ENCODE measurements at regions of chr1 and their contacts with region 1.

Region 1: GRCh38 chr1:212455803-212456528 is 23.2 kb downstream of the NENF start:
- DNase-seq: peak; percentile 82
- CTCF ChIP-seq: peak; percentile 90

Region 2: GRCh38 chr1:211698161-211699026 is 757.6 kb before region 1 on chr1:
- CTCF ChIA-PET with region 1: interaction called, 22 read pairs
- POLR2A ChIA-PET with region 1: no interaction called
- DNase-seq: peak; percentile 86
- CTCF ChIP-seq: peak; percentile 99

Region 3: DNA sequence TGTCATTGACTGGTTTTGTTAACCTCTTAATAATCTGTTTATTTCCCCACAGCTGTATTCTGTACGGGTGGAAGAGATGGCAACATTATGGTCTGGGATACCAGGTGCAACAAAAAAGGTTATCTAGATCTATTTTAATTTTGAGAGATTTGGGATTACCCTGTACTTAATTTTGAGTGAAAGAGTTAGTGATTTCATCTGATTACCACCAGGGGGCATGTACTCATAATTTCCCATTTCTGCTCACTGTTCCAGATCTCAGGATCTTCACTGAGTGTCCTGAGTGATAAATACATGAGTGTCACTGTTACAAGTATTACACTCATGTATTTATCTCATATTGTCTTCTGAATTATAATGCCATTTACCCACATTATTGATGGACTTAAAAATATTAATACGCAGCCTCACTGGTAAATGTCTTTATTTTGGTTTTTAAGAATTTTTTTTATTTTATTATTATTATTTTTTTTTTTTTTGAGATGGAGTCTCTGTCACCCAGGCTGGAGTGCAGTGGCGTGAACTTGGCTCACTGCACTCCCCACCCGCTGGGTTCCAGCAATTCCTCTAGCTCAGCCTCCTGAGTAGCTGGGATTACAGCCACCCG is 393.0 kb before region 1 on chr1:
- CTCF ChIA-PET with region 1: interaction called, 130 read pairs
- POLR2A ChIA-PET with region 1: no interaction called
- DNase-seq: peak; percentile 28
- CTCF ChIP-seq: peak; percentile 49

Region 4: DNA sequence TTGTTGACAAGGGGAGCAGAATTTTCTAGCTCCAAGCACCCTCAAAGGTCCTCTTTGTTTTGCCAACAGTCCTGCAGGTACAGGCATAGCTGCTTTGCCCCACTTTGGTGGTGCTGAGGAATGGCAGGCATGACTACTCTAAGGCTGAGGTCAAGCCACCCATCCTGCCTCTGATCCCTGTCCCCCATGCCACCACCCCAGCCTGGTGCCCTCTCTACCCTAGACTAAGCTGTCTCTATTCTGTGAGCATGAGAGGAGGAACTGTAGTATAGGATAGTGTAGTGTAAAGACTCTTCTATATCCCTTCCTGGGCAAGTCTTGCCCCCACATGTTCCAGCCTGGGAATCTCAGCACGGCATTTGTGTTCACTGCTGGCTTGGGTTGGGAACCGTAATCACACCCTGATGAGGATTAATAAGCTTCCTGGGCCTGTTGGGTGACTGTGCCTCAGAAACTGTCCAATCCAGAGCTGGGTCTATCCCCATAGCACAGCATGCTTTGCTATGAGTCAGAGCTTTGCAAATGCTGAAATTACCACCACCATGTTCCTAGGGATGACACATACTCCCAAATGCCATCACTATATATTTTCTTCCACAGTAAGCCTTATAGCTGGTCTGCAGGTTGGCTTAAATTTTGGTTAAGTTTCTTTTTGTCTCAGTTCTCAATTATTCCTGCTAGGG is 276.4 kb before region 1 on chr1:
- CTCF ChIA-PET with region 1: interaction called, 11 read pairs
- POLR2A ChIA-PET with region 1: no interaction called
- DNase-seq: no peak
- CTCF ChIP-seq: no peak

Region 5: DNA sequence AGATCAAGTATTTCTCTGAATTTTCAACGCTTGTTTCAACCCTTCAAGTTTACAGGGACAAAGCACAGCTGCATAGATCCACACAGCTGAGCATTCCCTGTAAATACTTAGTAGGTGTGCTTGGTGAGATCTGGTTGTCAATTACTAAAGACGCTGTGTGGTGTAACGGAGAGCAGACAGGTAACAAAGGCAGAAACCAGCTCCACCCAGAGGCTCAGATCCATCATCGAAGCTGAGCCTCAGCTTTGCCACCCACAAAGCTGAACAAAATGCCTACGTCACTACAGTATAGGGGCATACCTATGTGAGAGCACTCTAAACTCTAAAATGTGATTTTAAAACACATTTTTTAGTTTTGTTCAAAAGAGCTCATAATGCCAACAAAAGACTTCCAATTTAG is 80.0 kb before region 1 on chr1:
- CTCF ChIA-PET with region 1: interaction called, 12 read pairs
- POLR2A ChIA-PET with region 1: no interaction called
- DNase-seq: no peak
- CTCF ChIP-seq: no peak

Region 6: DNA sequence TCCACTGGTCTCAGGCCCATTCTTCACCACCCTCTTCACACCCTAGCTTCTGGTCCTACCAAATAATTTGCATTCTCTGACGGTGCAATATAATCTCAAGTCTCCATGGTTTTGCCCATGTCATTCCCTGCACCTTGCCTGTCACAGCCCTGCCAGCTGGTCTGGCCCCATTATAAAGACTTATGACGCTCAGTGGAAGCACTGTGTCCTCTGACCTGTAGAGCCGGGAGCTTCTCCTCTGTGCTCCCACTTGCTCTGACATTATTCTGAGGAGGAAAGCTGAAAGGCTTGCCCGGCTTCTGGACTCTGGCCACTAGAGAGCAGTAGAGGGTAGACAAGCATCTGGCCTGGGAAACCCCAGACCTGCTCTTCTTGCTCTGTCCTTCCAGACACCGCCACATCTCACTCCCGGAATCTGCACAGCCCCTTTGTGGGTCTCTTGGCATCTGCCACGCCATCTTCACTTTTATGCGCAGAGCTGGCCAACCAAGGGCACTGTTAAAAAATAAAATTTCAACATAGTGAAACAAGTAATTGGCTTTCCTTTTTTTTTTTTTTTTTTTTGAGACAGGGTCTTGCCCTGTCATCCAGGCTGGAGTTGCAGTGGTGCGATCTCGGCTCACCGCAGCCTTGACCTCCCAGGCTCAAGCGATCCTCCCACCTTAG is 21.2 kb after region 1 on chr1:
- CTCF ChIA-PET with region 1: interaction called, 190 read pairs
- POLR2A ChIA-PET with region 1: no interaction called
- DNase-seq: peak; percentile 87
- CTCF ChIP-seq: peak; percentile 90